Left colon (tissue), 2 donors: ENCODE measurements at regions of chr7 and their contacts with region 1.

Region 1: GRCh38 chr7:36291387-36292316 is 98.0 kb upstream of the ANLN start:
- DNase-seq: peak; percentile 80 to 93
- ATAC-seq: peak; percentile 81

Region 2: DNA sequence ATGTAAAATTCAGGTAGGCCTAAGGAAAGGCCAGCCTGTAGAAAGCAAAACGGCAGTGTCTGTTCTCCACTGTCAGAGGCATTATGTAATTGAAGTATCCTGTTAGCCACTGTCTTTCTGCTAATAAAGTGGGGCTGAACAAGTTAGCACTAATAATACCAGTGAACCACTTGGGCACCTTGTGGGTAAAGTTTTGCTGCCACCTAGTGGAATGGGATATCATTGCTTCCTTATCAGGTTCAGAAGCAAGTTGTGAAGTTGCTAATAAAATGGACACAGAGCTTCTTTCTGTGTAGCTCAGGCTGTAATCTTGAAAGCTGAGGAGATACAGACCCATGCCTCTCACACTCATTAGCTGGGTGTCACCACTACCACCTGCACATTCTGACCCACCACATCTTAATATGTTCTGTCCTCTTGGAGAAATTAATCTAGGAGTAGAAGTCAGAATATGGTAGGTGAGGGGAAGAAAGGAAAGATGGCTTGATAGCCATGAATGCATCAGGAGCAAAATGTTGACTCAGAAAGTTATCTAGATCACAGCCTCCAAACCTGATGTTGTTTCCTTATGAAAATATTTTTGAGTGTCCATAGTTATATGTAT is 315.7 kb before region 1 on chr7:
- intact Hi-C with region 1: loop called (anchors 5 to 10 kb)
- DNase-seq: no peak
- ATAC-seq: peak; percentile 69

Region 3: DNA sequence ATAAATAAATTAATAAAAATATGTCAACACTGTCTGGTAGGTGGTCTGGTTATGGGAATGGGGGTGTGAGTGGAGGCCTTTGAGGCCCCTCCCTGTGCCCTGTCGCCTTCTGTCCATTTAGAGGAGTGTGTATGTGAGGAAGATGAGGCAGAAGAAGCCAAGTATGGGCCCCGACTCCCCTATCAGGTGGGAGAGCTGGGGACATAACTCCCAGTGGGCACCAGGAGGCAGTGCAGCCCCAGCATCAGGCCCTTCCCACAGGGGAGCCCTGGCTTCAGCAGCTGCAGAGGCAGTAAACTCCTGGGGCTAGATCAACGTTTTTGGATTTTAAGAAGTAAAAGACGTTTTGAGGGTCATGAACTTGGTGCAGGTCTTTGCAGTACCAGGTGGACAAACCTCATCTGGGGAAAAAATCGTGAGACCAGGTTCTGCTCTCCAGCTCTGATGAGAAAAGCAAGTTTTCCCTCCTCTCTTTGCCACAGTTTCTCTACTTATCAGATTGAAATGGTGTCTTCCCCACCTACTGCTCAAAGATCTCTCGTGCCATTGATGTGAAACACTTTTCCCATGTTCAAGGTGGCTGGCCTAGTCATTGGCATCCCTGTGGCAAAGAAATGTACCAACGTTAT is 306.4 kb before region 1 on chr7:
- intact Hi-C with region 1: loop called in 1 of 2 experiments (anchors 10 kb)
- DNase-seq: peak; percentile 67 to 84
- ATAC-seq: peak; percentile 99

Region 4: GRCh38 chr7:36152756-36153570 is 138.7 kb before region 1 on chr7 and contains the start of gene EEPD1:
- intact Hi-C with region 1: loop called in 1 of 2 experiments (anchors 10 kb)
- DNase-seq: peak; percentile 100
- ATAC-seq: peak; percentile 90
- total RNA-seq, gene EEPD1: 10.2 to 13.4 TPM

Region 5: DNA sequence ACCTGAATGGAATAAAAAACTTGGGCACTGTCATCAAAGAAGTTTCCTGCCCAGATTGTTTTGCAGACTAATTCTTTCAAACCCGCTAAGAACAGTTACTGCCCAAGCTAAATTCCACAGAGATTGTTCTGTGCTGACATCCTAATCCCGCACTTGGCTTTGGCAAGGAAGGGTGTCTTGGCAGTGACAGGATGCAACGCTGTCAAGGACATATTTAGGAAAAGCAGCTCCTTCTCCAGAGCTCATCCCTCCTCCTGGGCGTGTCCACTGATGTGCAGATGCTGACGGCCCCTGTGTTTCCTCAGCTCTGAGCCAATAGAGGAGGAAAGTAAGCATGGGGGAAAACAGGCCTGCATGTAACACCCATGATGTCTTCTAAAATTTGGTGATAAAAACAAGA is 64.4 kb before region 1 on chr7:
- intact Hi-C with region 1: no loop called
- DNase-seq: peak; percentile 25 to 66
- ATAC-seq: peak; percentile 22

Region 6: DNA sequence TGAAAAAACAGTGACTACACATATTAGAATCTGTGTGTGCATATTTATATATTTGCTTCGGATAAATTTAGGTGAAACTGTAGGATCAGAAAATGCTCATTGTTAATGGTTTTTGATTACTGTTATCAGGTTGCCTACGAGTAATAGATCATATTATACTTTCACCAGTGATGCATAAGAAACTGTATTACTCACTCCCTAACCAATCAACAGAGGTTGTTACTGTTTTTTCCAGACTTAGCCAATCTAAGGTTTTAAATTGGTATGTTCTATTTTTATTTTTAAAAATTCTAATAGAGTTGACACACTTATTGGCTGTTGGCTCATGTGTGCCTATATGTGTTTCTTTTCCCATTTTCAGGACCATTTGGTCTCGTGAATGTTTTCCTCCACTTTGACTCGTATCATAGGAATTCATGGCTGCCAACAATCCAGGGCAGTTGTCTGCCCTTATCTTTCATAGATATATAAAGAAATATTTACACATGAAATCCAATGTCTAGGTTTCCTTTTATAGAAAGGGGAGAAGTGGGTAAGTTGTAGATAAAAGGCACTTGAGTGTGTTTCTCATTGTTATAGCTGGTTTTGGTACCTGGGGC is 157.2 kb after region 1 on chr7:
- intact Hi-C with region 1: no loop called
- DNase-seq: no peak
- ATAC-seq: peak; percentile 76

Region 7: DNA sequence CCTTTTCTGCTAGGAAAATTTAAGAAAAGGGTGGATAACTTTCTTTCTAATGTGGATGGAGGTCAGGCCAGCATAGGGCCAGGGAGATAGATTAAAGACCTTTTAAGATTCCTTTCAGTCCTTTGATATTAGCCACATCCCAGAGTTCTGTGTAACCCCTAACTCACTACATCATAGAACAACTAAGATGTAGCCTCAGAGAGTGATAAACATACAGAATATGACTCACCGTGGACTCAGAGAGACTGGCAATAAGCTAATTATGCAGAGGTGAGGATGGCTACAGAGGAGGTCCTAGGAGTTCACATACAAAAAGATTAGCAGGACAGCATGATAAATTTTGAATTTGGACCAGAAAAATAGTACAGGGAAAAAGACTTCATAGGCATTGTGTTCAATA is 291.7 kb after region 1 on chr7:
- intact Hi-C with region 1: no loop called
- DNase-seq: no peak
- ATAC-seq: no peak